Ascending aorta (tissue), 2 donors: ENCODE measurements at regions of chr1 and their contacts with region 1.

Region 1: DNA sequence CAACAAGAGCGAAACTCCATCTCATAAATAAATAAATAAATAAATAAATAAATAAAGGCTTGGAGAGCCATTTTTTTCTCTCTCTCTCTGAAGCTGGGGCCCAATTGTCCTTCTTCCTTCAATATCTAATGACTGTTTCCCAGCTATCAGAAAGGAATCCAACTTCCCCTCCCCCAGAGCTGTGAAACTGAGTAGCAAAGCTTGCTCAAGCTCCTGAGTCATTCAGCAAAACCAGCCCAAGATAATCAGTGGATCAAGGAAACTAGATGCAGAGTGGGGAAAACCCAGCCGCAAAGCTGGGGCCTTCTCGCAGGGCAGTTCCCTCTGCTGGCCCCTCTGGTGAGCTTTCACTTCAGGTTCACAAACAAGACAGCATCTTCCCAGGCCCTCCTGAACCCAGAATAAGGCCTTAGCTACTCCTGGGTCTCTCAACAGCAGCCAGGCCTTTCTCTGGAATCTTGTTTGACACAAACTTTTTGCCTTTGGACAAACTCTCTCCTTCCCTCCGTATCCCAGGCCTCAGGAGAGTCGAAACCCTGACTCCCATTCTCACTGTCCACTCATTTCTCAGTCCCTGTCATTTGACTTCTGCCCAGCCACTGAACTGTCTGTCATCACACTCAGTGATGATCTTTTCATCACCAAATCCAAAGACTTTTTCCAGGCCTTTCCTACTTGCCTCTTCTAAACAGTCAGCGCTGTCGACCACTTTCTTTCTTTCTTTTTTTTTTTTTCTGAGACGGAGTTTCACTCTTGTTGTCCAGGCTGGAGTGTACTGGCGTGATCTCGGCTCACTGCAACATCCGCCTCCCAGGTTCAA is 18.0 kb upstream of the PTP4A2 start:
- DNase-seq: peak; percentile 77 to 95
- H3K4me3 ChIP-seq: peak overlapping the region in 1 of 2 donors; percentile 26
- H3K27ac ChIP-seq: peak overlapping the region; percentile 85 to 90
- H3K4me1 ChIP-seq: peaks cover 23 to 34% of the 10 kb centered on the region in 2 donors
- H3K27me3 ChIP-seq: no peaks in the 10 kb centered on the region
- CTCF ChIP-seq: peak; percentile 19 to 52 (median 39)

Region 2: GRCh38 chr1:31923901-31924535 is 32.1 kb before region 1 on chr1:
- intact Hi-C with region 1: loop called (anchors 5 kb)
- DNase-seq: no peak
- H3K4me3 ChIP-seq: no peak overlapping the region
- H3K27ac ChIP-seq: no peak overlapping the region
- H3K4me1 ChIP-seq: peaks cover 6 to 51% of the 10 kb centered on the region in 2 donors
- H3K27me3 ChIP-seq: no peaks in the 10 kb centered on the region
- CTCF ChIP-seq: no peak

Region 3: DNA sequence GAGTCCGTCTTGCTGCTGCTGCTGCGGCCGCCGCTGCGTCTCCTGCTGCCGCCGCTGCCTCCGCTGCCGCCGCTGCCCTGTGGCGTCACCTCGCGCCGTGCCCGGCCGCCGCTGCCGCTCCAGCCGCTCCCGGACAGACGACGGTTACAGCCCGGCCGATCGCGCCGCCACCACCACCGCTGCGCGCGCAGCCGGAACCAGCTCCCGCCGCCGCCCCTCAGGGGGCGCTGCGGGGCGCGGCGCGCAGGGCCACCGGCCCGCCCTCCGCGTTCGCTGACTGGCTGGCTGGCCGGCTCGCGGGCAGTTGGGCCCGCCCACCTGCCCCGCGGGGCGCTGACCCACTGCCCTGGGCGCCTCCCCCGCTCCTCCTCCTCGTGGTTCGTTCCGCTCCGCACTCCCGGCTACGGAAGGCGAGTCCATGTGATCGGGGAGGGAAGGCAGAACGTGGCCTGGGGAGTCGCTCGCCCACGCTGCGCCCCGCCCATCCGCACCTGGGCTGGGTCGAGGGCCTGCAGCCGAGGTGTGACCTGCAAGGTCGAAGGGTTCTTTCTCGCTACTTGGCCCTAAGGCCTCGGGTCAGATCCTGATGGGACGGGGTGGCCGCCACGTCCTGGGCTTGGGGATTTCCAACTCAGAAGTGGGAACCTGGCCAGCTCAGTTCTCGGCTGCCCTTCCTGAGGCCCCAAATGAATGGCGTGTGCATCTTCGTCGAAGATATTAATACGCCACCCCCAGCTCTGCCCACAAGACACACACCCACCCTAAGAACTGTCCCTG is 17.8 kb before region 1 on chr1 and contains the start of gene PTP4A2:
- intact Hi-C with region 1: loop called (anchors 1 kb)
- DNase-seq: peak; percentile 77 to 95
- H3K4me3 ChIP-seq: peak within 1 kb of the TSS; percentile 70 to 85
- H3K27ac ChIP-seq: peak within 1 kb of the TSS; percentile 94 to 97
- H3K4me1 ChIP-seq: peaks cover 12 to 26% of the 10 kb centered on the region in 2 donors
- H3K27me3 ChIP-seq: no peaks in the 10 kb centered on the region
- CTCF ChIP-seq: peak in 1 of 3 experiments; percentile 98
- total RNA-seq, gene PTP4A2: 174 TPM

Region 4: DNA sequence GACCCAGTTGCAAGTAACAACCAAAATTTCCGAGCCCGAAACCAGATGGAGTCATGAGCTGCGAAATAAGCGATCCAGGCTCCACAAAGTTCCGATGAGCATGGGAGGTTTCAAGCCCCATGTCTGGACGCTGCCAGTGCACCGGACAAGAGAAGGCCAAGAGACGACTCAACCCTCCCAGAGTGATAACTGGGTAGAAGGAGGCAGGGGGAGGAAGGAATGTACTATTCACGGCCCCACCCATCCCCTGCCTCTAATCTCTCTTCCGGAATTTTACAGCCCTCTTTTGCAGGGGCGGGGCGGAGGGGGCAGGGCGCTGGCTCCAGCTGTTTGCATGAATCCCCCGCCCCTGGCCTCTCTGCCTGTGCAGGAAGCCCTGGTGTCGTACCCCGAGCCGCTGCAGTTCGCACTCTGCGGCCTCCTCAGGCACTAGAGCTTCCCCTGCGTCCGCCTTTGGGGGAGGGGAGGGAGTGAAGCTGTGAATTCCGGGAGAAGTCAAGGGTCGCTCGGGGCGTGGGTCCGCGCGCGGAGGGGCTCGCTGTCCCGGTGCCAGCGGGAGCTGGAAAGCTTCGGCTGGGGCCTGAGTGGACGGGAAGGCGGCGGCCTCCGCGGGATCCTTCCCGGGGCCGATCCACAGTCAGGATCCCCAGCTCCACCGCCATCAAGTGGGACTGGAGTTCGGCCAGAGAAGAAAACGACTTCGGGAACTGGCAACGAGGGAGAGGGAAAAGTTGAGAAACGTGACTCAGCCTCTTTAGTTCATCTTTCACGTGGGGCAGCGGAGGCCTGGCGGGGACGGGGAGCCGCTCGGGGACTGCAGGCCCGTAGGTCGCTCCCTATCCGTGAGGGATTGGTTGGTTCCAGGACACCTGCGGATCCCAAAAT is 11.7 kb before region 1 on chr1:
- intact Hi-C with region 1: loop called (anchors 1 kb)
- DNase-seq: peak; percentile 66 to 93
- H3K4me3 ChIP-seq: peak overlapping the region; percentile 18 to 59
- H3K27ac ChIP-seq: peak overlapping the region; percentile 93 to 95
- H3K4me1 ChIP-seq: peaks cover 4 to 12% of the 10 kb centered on the region in 2 donors
- H3K27me3 ChIP-seq: no peaks in the 10 kb centered on the region
- CTCF ChIP-seq: no peak

Region 5: DNA sequence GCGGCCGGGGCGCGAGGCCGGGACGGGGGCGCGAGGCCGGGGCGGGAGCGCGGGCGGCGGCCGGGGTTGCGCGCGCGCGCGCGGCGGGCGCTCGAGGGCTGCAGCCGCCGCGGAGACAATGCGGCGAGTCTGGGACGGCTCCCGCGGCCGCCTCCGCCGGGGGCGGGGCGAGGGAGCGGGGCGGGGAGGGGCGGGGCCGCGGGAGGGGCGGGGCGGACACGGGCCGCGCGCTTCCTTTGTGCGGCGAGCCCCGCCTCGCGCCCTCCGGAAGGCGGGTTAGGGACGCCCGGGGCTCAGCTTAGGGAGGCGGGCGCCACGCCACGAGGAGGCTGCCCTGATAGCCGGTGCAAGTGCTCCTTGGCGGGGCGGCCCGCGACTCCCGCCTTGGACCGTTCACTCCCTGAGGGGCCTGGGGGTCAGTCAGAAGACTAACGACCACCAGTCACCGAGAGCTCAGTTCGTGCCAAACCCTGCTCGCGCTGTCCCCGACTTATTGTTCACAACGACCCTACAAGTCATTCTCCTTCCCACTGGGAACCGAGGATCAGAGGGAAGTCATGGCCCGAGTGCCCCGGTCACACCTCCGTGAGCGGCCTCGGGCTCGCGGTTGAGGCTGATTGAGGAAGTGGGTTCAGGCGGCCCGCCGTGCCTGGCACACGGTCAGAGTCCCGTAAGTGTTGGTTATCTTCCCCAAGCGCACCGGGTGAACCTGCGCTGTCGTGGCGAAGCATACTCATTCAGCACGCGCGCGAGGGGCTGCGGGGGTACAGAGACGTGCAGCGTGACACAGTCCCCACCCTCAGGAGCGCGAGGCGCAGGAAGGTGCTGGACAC is 1393.9 kb after region 1 on chr1:
- intact Hi-C with region 1: loop called (anchors 10 kb)
- DNase-seq: peak in 1 of 2 donors; percentile 93
- H3K4me3 ChIP-seq: peak overlapping the region; percentile 71 to 99
- H3K27ac ChIP-seq: peak overlapping the region; percentile 81 to 85
- H3K4me1 ChIP-seq: peaks cover 6 to 23% of the 10 kb centered on the region in 2 donors
- H3K27me3 ChIP-seq: no peaks in the 10 kb centered on the region
- CTCF ChIP-seq: no peak